GM12878 (cell line): ENCODE measurements at regions of chr15 and their contacts with region 1.

Region 1: DNA sequence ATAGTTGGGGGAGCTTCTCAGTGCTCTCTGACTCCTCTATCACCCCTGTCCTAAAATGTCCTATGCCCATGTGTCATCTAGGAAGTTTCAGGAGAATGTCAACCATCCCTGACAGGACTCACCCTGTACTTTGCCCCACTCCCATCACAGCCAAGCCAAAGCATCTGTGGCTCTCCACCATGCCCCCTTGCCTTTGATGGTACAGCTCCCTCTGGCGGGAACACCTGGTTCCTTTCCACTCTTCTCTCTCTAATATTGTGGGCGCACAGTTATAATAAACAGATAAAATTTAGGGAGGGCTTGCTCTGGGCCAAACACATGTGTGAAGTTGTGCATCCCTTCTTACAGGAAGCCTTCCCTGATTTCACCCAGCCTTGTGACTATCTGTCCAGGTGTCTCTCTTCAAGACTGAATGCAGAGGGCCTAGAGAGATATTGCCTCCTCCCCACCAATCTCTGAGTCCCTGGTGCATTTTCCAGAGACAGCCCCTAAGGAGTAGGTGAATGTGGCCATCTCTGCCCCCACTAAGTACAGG is 62.8 kb downstream of the ISG20 start:
- DNase-seq: no peak
- ATAC-seq: peak; percentile 98
- H3K4me3 ChIP-seq: no peak overlapping the region
- H3K27ac ChIP-seq: no peak overlapping the region
- H3K4me1 ChIP-seq: no peaks in the 10 kb centered on the region
- H3K27me3 ChIP-seq: peaks cover 3 to 4% of the 10 kb centered on the region in 2 experiments
- CTCF ChIP-seq: peak; percentile 67 to 76 (median 73)
- EP300 ChIP-seq: no peak
- POLR2A ChIP-seq: no peak
- RAD21 ChIP-seq: peak; percentile 80

Region 2: GRCh38 chr15:88476635-88477060 is 225.0 kb before region 1 on chr15:
- CTCF ChIA-PET with region 1: interaction called, 3 read pairs
- POLR2A ChIA-PET with region 1: no interaction called
- RAD21 ChIA-PET with region 1: no interaction called
- SMC1A ChIA-PET with region 1: interaction called, 3 read pairs
- in situ Hi-C with region 1: no loop called
- intact Hi-C with region 1: loop called (anchors 5 kb)
- DNase-seq: no peak
- ATAC-seq: peak; percentile 65
- H3K4me3 ChIP-seq: no peak overlapping the region
- H3K27ac ChIP-seq: no peak overlapping the region
- H3K4me1 ChIP-seq: peaks cover 4% of the 10 kb centered on the region
- H3K27me3 ChIP-seq: no peaks in the 10 kb centered on the region
- CTCF ChIP-seq: peak; percentile 47 to 71 (median 60); a peak in 5 of 6 replicates
- EP300 ChIP-seq: no peak
- POLR2A ChIP-seq: no peak
- RAD21 ChIP-seq: peak; percentile 78

Region 3: DNA sequence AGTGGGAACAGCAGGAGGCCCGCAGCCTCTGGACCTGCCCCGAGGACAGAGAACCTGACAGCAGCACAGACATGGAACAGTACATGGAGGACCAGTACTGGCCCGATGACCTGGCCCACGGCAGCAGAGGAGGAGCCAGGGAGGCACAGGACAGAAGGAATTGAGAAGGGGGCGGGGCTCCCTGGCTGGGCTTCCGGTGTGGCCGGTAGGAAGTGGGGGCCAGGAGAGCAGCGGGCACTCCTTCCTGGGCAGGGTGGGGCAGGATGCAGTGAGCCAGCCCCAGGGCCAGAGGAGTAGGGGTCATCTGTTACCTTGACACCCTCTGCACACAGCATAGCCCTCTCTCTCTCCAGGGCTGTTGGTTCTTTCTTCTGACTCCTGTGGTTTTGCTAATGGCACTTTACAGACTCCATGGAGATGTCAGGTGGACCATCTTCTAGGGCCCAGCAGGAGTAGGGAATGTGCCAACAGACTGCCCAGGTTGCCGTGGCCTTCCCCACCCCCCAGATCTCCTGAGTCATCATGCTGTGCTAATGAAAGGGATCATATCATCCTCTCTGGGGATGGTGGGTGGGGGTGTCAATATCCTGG is 71.4 kb before region 1 on chr15:
- CTCF ChIA-PET with region 1: interaction called, 52 read pairs
- POLR2A ChIA-PET with region 1: no interaction called
- RAD21 ChIA-PET with region 1: no interaction called
- SMC1A ChIA-PET with region 1: interaction called, 26 read pairs
- in situ Hi-C with region 1: loop called (anchors 5 kb)
- intact Hi-C with region 1: no loop called
- DNase-seq: no peak
- ATAC-seq: peak; percentile 60
- H3K4me3 ChIP-seq: no peak overlapping the region
- H3K27ac ChIP-seq: no peak overlapping the region
- H3K4me1 ChIP-seq: peaks cover 54% of the 10 kb centered on the region
- H3K27me3 ChIP-seq: no peaks in the 10 kb centered on the region
- CTCF ChIP-seq: no peak
- EP300 ChIP-seq: no peak
- POLR2A ChIP-seq: peak; percentile 45
- RAD21 ChIP-seq: no peak

Region 4: DNA sequence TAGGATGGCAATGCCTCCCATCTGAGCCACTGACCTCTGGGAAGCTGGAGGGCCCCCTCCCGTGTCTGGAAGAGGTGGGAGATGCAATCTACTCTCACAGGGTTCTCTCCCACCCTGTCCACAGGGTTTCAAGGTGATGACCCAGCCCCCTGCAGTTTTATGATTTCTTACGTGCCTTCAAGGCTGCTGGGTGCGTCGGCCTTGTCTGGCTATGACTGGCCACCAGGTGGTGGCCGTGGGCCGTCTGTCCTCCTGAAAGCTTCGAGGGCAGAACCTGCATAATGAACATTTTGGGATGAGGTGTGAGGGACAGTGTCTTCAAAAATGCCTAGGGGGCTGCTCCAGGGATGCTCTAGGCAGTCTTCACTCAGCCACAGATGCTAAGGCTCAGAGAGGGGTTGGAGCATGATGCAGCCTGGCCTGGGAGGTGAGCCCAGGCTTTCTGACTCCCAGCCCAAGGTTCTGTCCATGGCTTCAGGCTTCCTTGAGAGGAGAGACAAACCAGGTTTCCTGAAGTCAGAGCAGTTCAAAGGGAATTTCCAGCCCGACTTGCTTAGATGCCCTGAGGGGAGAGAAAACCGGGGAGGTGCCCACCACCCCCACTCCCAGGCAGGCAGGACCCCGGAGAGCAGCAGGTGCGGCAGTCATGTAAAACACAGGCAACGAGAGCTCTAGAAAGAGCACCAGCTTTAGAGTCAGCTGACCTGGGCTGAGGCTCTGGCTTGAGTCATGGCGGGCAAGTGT is 44.1 kb before region 1 on chr15:
- CTCF ChIA-PET with region 1: interaction called, 9 read pairs
- POLR2A ChIA-PET with region 1: no interaction called
- RAD21 ChIA-PET with region 1: interaction called, 7 read pairs
- SMC1A ChIA-PET with region 1: interaction called, 5 read pairs
- in situ Hi-C with region 1: no loop called
- intact Hi-C with region 1: loop called (anchors 2 kb)
- DNase-seq: no peak
- ATAC-seq: peak; percentile 71
- H3K4me3 ChIP-seq: no peak overlapping the region
- H3K27ac ChIP-seq: no peak overlapping the region
- H3K4me1 ChIP-seq: peaks cover 15% of the 10 kb centered on the region
- H3K27me3 ChIP-seq: no peaks in the 10 kb centered on the region
- CTCF ChIP-seq: peak; percentile 52 to 60 (median 55)
- EP300 ChIP-seq: no peak
- POLR2A ChIP-seq: no peak
- RAD21 ChIP-seq: peak; percentile 75